HepG2 (cell line): ENCODE measurements at regions of chr2 and their contacts with region 1.

Region 1: GRCh38 chr2:205925373-205926337 is 160.3 kb downstream of the INO80D start:
- DNase-seq: peak; percentile 38
- ATAC-seq: peak; percentile 96
- H3K4me3 ChIP-seq: peak overlapping the region in 1 of 3 experiments; percentile 33; a peak in 2 of 6 replicates
- H3K27ac ChIP-seq: no peak overlapping the region
- H3K4me1 ChIP-seq: peaks cover 35% of the 10 kb centered on the region
- H3K27me3 ChIP-seq: peaks cover 5 to 67% of the 10 kb centered on the region in 2 experiments; a peak in 4 of 5 replicates
- CTCF ChIP-seq: peak; percentile 100
- EP300 ChIP-seq: no peak
- POLR2A ChIP-seq: no peak
- RAD21 ChIP-seq: peak; percentile 98

Region 2: GRCh38 chr2:204260162-204260877 is 1665.3 kb before region 1 on chr2:
- CTCF ChIA-PET with region 1: interaction called, 10 read pairs
- POLR2A ChIA-PET with region 1: no interaction called
- in situ Hi-C with region 1: no loop called
- intact Hi-C with region 1: no loop called
- DNase-seq: peak; percentile 77
- ATAC-seq: peak; percentile 97
- H3K4me3 ChIP-seq: no peak overlapping the region
- H3K27ac ChIP-seq: no peak overlapping the region
- H3K4me1 ChIP-seq: no peaks in the 10 kb centered on the region
- H3K27me3 ChIP-seq: no peaks in the 10 kb centered on the region
- CTCF ChIP-seq: peak; percentile 75
- EP300 ChIP-seq: no peak
- POLR2A ChIP-seq: no peak
- RAD21 ChIP-seq: peak; percentile 62

Region 3: GRCh38 chr2:205776139-205776538 is 149.5 kb before region 1 on chr2:
- CTCF ChIA-PET with region 1: interaction called, 22 read pairs
- POLR2A ChIA-PET with region 1: no interaction called
- in situ Hi-C with region 1: loop called (anchors 5 kb)
- intact Hi-C with region 1: loop called (anchors 1 kb)
- DNase-seq: peak; percentile 62
- ATAC-seq: peak; percentile 98
- H3K4me3 ChIP-seq: no peak overlapping the region
- H3K27ac ChIP-seq: no peak overlapping the region
- H3K4me1 ChIP-seq: no peaks in the 10 kb centered on the region
- H3K27me3 ChIP-seq: peaks cover 0 to 6% of the 10 kb centered on the region in 2 experiments; a peak in 2 of 5 replicates
- CTCF ChIP-seq: peak; percentile 93
- EP300 ChIP-seq: peak in 1 of 2 experiments; percentile 28; a peak in 1 of 4 replicates
- POLR2A ChIP-seq: no peak
- RAD21 ChIP-seq: peak; percentile 96

Region 4: DNA sequence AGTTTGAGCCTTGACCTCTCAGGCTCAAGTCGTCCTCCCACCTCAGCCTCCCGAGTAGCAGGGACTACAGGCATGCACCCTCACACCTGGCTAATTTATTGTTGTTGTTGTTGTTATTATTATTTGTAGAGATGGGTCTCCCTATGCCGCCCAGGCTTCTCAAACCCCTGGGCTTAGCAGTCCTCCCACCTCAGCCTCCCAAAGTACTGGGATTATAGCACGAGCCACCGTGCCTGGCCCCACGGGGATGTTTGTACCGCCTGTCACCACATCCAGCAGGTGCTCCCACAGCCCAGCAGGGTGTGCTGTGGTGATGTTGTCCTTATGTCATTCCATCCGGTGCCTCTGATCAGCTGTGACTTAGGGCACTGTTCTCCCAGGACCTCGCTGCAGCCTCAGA is 22.0 kb before region 1 on chr2:
- CTCF ChIA-PET with region 1: interaction called, 20 read pairs
- POLR2A ChIA-PET with region 1: no interaction called
- in situ Hi-C with region 1: no loop called
- intact Hi-C with region 1: loop called (anchors 1 kb)
- DNase-seq: peak; percentile 79
- ATAC-seq: peak; percentile 98
- H3K4me3 ChIP-seq: no peak overlapping the region
- H3K27ac ChIP-seq: no peak overlapping the region
- H3K4me1 ChIP-seq: peaks cover 20% of the 10 kb centered on the region
- H3K27me3 ChIP-seq: peaks cover 0 to 48% of the 10 kb centered on the region in 2 experiments; a peak in 3 of 5 replicates
- CTCF ChIP-seq: peak; percentile 92
- EP300 ChIP-seq: no peak
- POLR2A ChIP-seq: no peak
- RAD21 ChIP-seq: peak; percentile 75

Region 5: GRCh38 chr2:205975082-205975949 is 49.7 kb after region 1 on chr2:
- CTCF ChIA-PET with region 1: no interaction called
- POLR2A ChIA-PET with region 1: no interaction called
- in situ Hi-C with region 1: no loop called
- intact Hi-C with region 1: loop called (anchors 1 kb)
- DNase-seq: peak; percentile 100
- ATAC-seq: peak; percentile 99
- H3K4me3 ChIP-seq: peak overlapping the region in 1 of 3 experiments; percentile 33; a peak in 2 of 6 replicates
- H3K27ac ChIP-seq: peak overlapping the region; percentile 89
- H3K4me1 ChIP-seq: peaks cover 96% of the 10 kb centered on the region
- H3K27me3 ChIP-seq: no peaks in the 10 kb centered on the region
- CTCF ChIP-seq: peak; percentile 28; the same call in 1 of the 2 replicates
- EP300 ChIP-seq: peak; percentile 51 to 95; a peak in 2 of 4 replicates
- POLR2A ChIP-seq: peak in 1 of 2 experiments; percentile 62; a peak in 2 of 4 replicates
- RAD21 ChIP-seq: peak; percentile 17; the same call in 1 of the 2 replicates

Region 6: DNA sequence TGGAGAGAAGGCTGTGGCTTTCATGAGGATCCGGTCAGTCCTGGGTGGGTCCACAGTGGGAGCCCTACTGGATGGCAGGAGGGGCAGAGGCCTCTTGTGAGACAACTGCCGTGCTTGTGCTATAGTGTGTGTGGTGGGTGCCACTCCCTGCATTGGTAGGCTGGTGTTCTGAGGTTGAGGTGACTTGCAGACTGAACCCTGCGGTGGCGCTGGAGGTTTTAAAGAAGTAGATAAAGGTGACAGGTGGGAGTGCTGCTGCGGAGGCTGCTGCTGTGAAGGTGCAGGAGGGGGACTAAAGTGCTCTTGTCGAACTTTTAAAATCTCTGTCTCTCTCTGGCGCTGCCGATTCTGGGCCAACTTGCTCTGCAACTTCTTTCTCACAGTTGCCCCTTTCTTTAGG is 130.6 kb after region 1 on chr2:
- CTCF ChIA-PET with region 1: no interaction called
- POLR2A ChIA-PET with region 1: no interaction called
- in situ Hi-C with region 1: no loop called
- intact Hi-C with region 1: no loop called
- DNase-seq: no peak
- ATAC-seq: no peak
- H3K4me3 ChIP-seq: no peak overlapping the region
- H3K27ac ChIP-seq: no peak overlapping the region
- H3K4me1 ChIP-seq: 0 out of 2 replicates have a peak, but pooled peaks cover 6% of the 10 kb centered on the region
- H3K27me3 ChIP-seq: no peaks in the 10 kb centered on the region
- CTCF ChIP-seq: no peak
- EP300 ChIP-seq: no peak
- POLR2A ChIP-seq: no peak
- RAD21 ChIP-seq: no peak